ENCODE measurements at regions of chr5 and their contacts with region 1.

Region 1: DNA sequence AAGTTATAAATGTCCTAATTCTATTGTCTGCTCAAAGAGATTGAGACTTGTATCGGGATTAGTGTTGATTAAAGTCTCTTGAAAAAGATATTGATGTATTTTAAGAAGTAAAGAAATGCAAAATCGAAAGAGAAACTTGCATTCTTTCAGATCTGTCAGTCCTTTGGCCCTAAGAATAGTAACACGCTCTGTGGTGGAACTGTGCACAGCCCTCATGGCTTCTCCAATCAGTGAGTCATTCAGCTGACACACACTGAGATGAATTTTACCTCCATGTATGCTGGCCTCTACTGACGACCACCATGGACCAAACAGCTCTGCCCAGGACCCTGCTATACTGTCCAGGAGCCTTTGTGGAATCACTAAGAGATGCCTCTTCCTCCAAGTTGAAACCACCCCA is 232.4 kb downstream of the ESM1 start:
- DNase-seq: no peak
- ATAC-seq: no peak
- H3K4me3 ChIP-seq: no peak overlapping the region
- H3K27ac ChIP-seq: no peak overlapping the region
- H3K4me1 ChIP-seq: no peaks in the 10 kb centered on the region
- H3K27me3 ChIP-seq: no peaks in the 10 kb centered on the region
- CTCF ChIP-seq: no peak

Region 2: DNA sequence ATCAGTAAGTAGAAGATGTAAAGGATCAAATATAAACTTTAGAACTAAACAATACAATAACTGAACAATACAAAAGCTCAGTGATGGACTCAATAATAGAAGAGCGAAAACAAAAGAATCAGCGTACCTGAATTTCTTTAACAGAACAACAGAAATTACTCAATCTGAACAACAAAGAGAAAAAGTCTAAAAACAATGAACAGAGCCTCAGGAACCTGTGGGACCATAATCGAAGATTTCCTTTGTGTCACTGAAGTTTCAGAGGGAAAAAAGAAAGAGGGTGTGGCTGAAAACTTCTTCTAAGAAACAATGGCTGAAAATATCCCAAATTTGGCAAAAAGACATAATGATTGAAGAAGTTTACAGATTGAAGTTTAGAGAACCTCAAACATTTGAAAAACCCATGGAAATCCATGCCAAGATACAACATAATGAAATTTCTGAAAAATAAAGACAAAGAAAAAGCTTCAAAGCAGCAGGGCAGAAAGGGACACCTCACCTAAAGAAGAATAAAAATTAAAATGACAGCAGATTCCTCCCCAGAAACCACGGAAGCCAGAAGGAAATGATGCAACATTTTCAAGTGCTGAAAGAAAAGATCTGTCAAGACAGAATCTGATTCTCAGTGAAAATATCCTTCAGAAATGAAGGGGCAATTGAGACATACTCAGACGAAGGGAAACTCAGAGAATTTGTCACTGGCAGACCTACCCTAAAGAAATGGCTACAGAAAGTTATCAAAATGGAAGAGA is 731.4 kb before region 1 on chr5:
- CTCF ChIA-PET with region 1: no interaction called
- POLR2A ChIA-PET with region 1: no interaction called
- in situ Hi-C with region 1: no loop called
- intact Hi-C with region 1: no loop called
- DNase-seq: no peak
- ATAC-seq: no peak
- H3K4me3 ChIP-seq: no peak overlapping the region
- H3K27ac ChIP-seq: no peak overlapping the region
- H3K4me1 ChIP-seq: no peaks in the 10 kb centered on the region
- H3K27me3 ChIP-seq: no peaks in the 10 kb centered on the region
- CTCF ChIP-seq: no peak

Region 3: DNA sequence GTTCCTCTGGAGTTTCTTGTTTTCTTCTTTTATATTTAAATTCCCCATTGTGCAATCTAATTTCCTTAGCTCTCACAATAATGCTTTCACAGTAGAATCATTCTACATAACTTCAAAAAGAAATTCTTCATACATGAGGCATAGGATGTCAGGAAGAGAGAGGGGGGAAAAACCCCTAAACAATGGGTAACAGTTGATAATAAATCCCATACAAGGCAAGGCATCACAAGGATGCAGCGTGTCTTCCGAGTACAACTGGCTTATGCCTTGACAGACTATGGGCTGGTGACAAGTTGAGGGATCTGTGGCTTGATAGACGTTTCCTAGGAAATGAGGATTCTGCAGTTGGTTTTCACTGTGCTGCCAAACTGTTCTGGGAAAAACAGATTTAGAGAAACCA is 690.1 kb before region 1 on chr5:
- CTCF ChIA-PET with region 1: no interaction called
- POLR2A ChIA-PET with region 1: no interaction called
- in situ Hi-C with region 1: no loop called
- intact Hi-C with region 1: no loop called
- DNase-seq: no peak
- ATAC-seq: no peak
- H3K4me3 ChIP-seq: no peak overlapping the region
- H3K27ac ChIP-seq: no peak overlapping the region
- H3K4me1 ChIP-seq: no peaks in the 10 kb centered on the region
- H3K27me3 ChIP-seq: no peaks in the 10 kb centered on the region
- CTCF ChIP-seq: no peak

Region 4: GRCh38 chr5:54234304-54234933 is 518.6 kb before region 1 on chr5:
- CTCF ChIA-PET with region 1: no interaction called
- POLR2A ChIA-PET with region 1: interaction called, 13 read pairs
- in situ Hi-C with region 1: no loop called
- intact Hi-C with region 1: no loop called
- DNase-seq: no peak
- ATAC-seq: no peak
- H3K4me3 ChIP-seq: no peak overlapping the region
- H3K27ac ChIP-seq: no peak overlapping the region
- H3K4me1 ChIP-seq: no peaks in the 10 kb centered on the region
- H3K27me3 ChIP-seq: no peaks in the 10 kb centered on the region
- CTCF ChIP-seq: peak; percentile 67

Region 5: DNA sequence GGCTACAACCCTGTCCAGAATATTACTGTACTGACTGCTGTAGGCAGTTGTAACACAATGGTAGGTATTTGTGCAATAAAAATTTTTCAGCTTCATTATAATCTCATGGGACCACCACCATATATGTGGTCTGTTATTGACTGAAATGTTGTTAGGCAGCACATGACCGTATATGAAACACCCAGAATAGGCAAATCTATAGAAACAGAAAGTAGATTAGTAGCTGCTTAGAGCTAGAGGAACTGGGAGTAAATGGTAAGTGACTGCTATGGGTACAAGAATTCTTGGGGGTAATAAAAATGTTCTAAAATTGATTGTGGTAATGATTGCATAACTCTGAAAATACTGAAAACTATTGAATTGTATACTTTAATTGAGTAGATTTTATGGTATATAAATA is 46.6 kb after region 1 on chr5:
- CTCF ChIA-PET with region 1: interaction called, 10 read pairs
- POLR2A ChIA-PET with region 1: no interaction called
- in situ Hi-C with region 1: no loop called
- intact Hi-C with region 1: no loop called
- DNase-seq: no peak
- ATAC-seq: no peak
- H3K4me3 ChIP-seq: no peak overlapping the region
- H3K27ac ChIP-seq: no peak overlapping the region
- H3K4me1 ChIP-seq: no peaks in the 10 kb centered on the region
- H3K27me3 ChIP-seq: no peaks in the 10 kb centered on the region
- CTCF ChIP-seq: no peak